ENCODE measurements at regions of chr21 and their contacts with region 1.

Region 1: GRCh38 chr21:44801468-44802395 is at the start of gene UBE2G2:
- DNase-seq: peak; percentile 75 to 93 (median 85)
- ATAC-seq: peak; percentile 88
- H3K4me3 ChIP-seq: peak within 1 kb of the TSS; percentile 78
- H3K4me3 Mint-ChIP-seq: peak within 1 kb of the TSS; percentile 95
- H3K27ac ChIP-seq: peak within 1 kb of the TSS; percentile 25 to 66
- H3K27ac Mint-ChIP-seq: peak within 1 kb of the TSS; percentile 80
- H3K4me1 ChIP-seq: peaks cover 28% of the 10 kb centered on the region
- H3K4me1 Mint-ChIP-seq: peaks cover 55% of the 10 kb centered on the region
- H3K27me3 ChIP-seq: no peaks in the 10 kb centered on the region
- H3K27me3 Mint-ChIP-seq: no peaks in the 10 kb centered on the region
- CTCF ChIP-seq: no peak
- total RNA-seq, gene UBE2G2: 89.9 to 96.8 TPM

Region 2: GRCh38 chr21:44817506-44817880 is 15.8 kb after region 1 on chr21:
- CTCF ChIA-PET with region 1: interaction called, 5 read pairs
- POLR2A ChIA-PET with region 1: interaction called, 29 read pairs
- intact Hi-C with region 1: loop called (anchors 1 kb)
- DNase-seq: peak; percentile 87 to 97 (median 94)
- ATAC-seq: peak; percentile 85
- H3K4me3 ChIP-seq: peak overlapping the region; percentile 61
- H3K4me3 Mint-ChIP-seq: peak overlapping the region; percentile 82
- H3K27ac ChIP-seq: no peak overlapping the region
- H3K27ac Mint-ChIP-seq: peak overlapping the region; percentile 65
- H3K4me1 ChIP-seq: peaks cover 19% of the 10 kb centered on the region
- H3K4me1 Mint-ChIP-seq: peaks cover 13% of the 10 kb centered on the region
- H3K27me3 ChIP-seq: no peaks in the 10 kb centered on the region
- H3K27me3 Mint-ChIP-seq: no peaks in the 10 kb centered on the region
- CTCF ChIP-seq: no peak

Region 3: GRCh38 chr21:44845399-44846223 is 43.9 kb after region 1 on chr21:
- CTCF ChIA-PET with region 1: interaction called, 7 read pairs
- POLR2A ChIA-PET with region 1: no interaction called
- intact Hi-C with region 1: loop called (anchors 1 to 2 kb)
- DNase-seq: peak in 12 of 14 experiments; percentile 24 to 74 (median 38)
- ATAC-seq: peak; percentile 66
- H3K4me3 ChIP-seq: peak overlapping the region; percentile 52
- H3K4me3 Mint-ChIP-seq: peak overlapping the region; percentile 80
- H3K27ac ChIP-seq: no peak overlapping the region
- H3K27ac Mint-ChIP-seq: peak overlapping the region; percentile 86
- H3K4me1 ChIP-seq: peaks cover 25% of the 10 kb centered on the region
- H3K4me1 Mint-ChIP-seq: peaks cover 12% of the 10 kb centered on the region
- H3K27me3 ChIP-seq: no peaks in the 10 kb centered on the region
- H3K27me3 Mint-ChIP-seq: no peaks in the 10 kb centered on the region
- CTCF ChIP-seq: peak; percentile 63

Region 4: GRCh38 chr21:44892536-44893277 is 91.0 kb after region 1 on chr21:
- CTCF ChIA-PET with region 1: interaction called, 11 read pairs
- POLR2A ChIA-PET with region 1: interaction called, 4 read pairs
- intact Hi-C with region 1: loop called in 1 of 2 experiments (anchors 1 kb)
- DNase-seq: peak; percentile 66 to 91 (median 76)
- ATAC-seq: peak; percentile 94
- H3K4me3 ChIP-seq: no peak overlapping the region
- H3K4me3 Mint-ChIP-seq: no peak overlapping the region
- H3K27ac ChIP-seq: no peak overlapping the region
- H3K27ac Mint-ChIP-seq: peak overlapping the region; percentile 79
- H3K4me1 ChIP-seq: peaks cover 30% of the 10 kb centered on the region
- H3K4me1 Mint-ChIP-seq: peaks cover 15% of the 10 kb centered on the region
- H3K27me3 ChIP-seq: no peaks in the 10 kb centered on the region
- H3K27me3 Mint-ChIP-seq: no peaks in the 10 kb centered on the region
- CTCF ChIP-seq: peak; percentile 94

Region 5: GRCh38 chr21:44911389-44912157 is 109.8 kb after region 1 on chr21:
- CTCF ChIA-PET with region 1: interaction called, 4 read pairs
- POLR2A ChIA-PET with region 1: interaction called, 7 read pairs
- intact Hi-C with region 1: loop called in 1 of 2 experiments (anchors 5 kb)
- DNase-seq: peak; percentile 45 to 88 (median 69)
- ATAC-seq: peak; percentile 74
- H3K4me3 ChIP-seq: peak overlapping the region; percentile 44
- H3K4me3 Mint-ChIP-seq: peak overlapping the region; percentile 76
- H3K27ac ChIP-seq: peak overlapping the region; percentile 77 to 86
- H3K27ac Mint-ChIP-seq: peak overlapping the region; percentile 88
- H3K4me1 ChIP-seq: peaks cover 98% of the 10 kb centered on the region
- H3K4me1 Mint-ChIP-seq: peaks cover 77% of the 10 kb centered on the region
- H3K27me3 ChIP-seq: no peaks in the 10 kb centered on the region
- H3K27me3 Mint-ChIP-seq: no peaks in the 10 kb centered on the region
- CTCF ChIP-seq: peak; percentile 58

Measured in CD4-positive, alpha-beta T cell (primary cell).